ENCODE measurements at regions of chr3 and their contacts with region 1.

Region 1: GRCh38 chr3:128590948-128591347 is 59.7 kb downstream of the RPN1 start:
- DNase-seq: no peak
- ATAC-seq: no peak
- H3K4me3 ChIP-seq: no peak overlapping the region
- H3K27ac ChIP-seq: no peak overlapping the region
- H3K4me1 ChIP-seq: no peaks in the 10 kb centered on the region
- H3K27me3 ChIP-seq: peaks cover 0 to 4% (median 0%) of the 10 kb centered on the region in 3 donors
- CTCF ChIP-seq: no peak
- POLR2A ChIP-seq: no peak

Region 2: DNA sequence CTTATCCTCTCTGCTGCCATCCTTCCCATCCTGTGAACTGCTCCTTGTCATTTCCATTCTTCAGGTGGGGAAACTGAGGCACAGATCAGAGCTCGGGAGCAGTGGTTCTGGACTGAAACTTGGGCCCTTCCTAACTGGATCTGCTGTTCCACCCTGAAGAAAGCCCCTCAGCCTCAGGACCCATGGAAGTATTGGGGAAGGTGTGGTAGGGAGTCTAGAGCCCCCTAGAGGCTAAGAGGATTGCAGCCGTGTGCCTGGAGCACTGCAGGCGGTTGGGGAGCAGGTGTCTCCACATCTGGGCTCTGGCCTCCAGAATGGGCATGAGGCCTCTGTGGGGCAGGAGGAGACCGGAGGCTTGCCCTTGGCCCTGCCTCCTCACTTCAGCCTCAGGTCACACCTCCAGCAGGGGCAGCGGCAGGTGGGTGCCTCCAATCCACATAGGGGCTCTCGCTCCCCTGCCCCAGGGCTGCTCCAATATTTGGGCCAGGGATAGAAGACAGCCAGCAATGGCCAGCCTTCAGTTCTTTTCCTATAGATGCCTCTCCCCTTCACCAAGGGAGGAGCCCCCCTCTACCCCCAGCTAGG is 152.4 kb before region 1 on chr3:
- in situ Hi-C with region 1: loop called in 3 of 4 experiments (anchors 10 to 25 kb)
- intact Hi-C with region 1: no loop called
- DNase-seq: no peak
- ATAC-seq: no peak
- H3K4me3 ChIP-seq: no peak overlapping the region
- H3K27ac ChIP-seq: no peak overlapping the region
- H3K4me1 ChIP-seq: no peaks in the 10 kb centered on the region
- H3K27me3 ChIP-seq: peaks cover 3 to 8% (median 7%) of the 10 kb centered on the region in 3 donors
- CTCF ChIP-seq: peak in 1 of 5 experiments; percentile 24
- POLR2A ChIP-seq: no peak

Region 3: DNA sequence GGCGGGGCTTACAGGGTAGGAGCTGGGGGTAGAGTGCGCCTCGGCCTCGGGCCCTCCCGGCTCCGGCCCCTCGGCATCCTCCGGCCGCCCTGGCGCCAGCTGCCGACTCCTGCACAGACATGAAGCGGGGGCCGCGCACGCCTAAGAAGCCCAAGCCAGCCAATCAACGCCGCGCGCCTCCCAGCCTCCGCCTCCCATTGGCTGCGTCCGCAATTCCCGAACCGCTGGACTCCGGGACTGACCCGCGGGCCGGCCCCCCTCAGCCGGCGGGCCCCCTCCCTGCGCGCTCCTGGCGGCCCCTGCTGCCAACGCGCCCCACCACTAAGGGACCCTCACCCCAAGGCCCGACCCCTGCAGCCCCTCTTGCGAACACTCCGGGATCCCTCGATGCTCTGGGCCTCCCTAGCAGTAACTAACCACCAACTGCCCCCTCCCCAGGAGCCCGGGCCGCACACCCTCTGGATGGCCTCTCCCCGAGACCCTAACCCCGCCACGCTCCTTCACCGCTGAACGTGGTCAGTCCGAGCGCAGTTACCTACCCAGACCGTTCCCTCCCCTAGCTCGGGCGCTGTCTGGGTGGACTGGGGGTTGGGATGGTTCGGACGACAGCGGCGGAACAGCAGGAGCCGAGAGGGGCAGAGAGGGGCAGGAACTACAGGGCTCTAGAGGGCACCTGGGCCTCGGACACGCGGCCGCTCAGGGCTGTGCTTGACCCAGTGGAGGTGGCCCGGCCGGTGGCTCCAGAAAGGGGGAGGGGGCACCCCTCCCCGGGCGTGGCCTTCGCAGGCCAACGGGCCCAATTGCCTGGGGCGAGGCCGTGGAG is 102.9 kb before region 1 on chr3:
- in situ Hi-C with region 1: no loop called
- intact Hi-C with region 1: no loop called
- DNase-seq: peak; percentile 56 to 58
- ATAC-seq: peak; percentile 58 to 61
- H3K4me3 ChIP-seq: peak overlapping the region; percentile 66 to 85 (median 68)
- H3K27ac ChIP-seq: peak overlapping the region; percentile 67 to 81 (median 78)
- H3K4me1 ChIP-seq: peaks cover 22 to 49% of the 10 kb centered on the region in 2 donors
- H3K27me3 ChIP-seq: peaks cover 88 to 100% (median 95%) of the 10 kb centered on the region in 3 donors
- CTCF ChIP-seq: no peak
- POLR2A ChIP-seq: peak; percentile 58 to 82